Calu3 (cell line): ENCODE measurements at regions of chr18 and their contacts with region 1.

Region 1: DNA sequence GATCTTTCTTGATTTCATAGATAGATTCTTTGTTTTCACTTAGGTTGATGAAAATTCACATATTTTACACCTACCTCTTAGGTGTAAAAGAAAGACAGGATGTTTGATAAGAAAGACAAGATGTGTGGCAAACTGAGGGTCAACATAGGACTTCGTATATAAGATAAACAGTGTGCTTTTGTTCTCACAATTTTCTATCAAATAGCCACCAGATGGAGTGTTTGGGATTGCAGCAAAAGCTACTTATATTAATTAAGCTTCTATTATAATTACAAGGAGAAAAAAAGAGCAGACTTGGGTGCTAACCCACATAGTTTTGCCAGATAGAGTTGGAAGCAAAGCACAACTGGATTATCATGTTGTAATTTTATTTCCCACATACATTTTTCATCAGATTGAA is 232.9 kb downstream of the CDH7 start:
- DNase-seq: no peak
- H3K4me3 Mint-ChIP-seq: no peak overlapping the region
- H3K27ac Mint-ChIP-seq: no peak overlapping the region
- H3K4me1 Mint-ChIP-seq: no peaks in the 10 kb centered on the region
- H3K27me3 Mint-ChIP-seq: no peaks in the 10 kb centered on the region
- CTCF ChIP-seq: no peak

Region 2: DNA sequence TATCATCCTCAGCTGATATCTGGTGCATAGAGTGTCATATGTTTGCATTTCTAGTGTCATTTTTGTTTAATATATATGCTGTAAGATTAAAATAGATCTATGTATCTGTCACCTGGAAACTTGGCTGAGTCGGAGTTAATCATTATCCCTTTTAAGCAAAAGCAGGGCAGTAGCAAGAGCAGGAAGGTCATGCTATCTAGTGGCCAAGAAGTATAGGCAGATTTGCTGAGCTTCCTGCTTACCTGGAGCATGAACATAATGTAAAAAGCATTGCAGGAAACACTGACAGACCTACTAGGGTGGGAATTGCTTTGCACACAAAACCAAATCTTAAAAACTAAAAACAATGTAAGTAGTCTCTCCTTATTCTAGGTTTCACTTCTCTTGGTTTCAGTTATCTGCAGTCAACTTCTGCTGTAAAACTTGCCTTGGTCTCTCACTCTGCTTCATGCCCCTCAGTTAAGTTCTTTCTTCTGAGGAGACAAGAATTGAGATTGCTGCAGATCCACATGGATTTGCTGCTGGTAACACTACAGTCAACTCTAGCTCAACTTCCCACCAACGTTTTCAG is 62.4 kb after region 1 on chr18:
- CTCF ChIA-PET with region 1: interaction called, 3 read pairs
- intact Hi-C with region 1: loop called (anchors 5 kb)
- DNase-seq: peak; percentile 6
- H3K4me3 Mint-ChIP-seq: no peak overlapping the region
- H3K27ac Mint-ChIP-seq: no peak overlapping the region
- H3K4me1 Mint-ChIP-seq: peaks cover 15% of the 10 kb centered on the region
- H3K27me3 Mint-ChIP-seq: no peaks in the 10 kb centered on the region
- CTCF ChIP-seq: no peak